Activated CD8-positive, alpha-beta memory T cell treated with anti-CD3 and anti-CD28 coated beads, Interleukin-2, amount 10 ng/mL, durations not matched to agents 7 days and 5 days (primary cell): ENCODE measurements at regions of chr1 and their contacts with region 1.

Region 1: DNA sequence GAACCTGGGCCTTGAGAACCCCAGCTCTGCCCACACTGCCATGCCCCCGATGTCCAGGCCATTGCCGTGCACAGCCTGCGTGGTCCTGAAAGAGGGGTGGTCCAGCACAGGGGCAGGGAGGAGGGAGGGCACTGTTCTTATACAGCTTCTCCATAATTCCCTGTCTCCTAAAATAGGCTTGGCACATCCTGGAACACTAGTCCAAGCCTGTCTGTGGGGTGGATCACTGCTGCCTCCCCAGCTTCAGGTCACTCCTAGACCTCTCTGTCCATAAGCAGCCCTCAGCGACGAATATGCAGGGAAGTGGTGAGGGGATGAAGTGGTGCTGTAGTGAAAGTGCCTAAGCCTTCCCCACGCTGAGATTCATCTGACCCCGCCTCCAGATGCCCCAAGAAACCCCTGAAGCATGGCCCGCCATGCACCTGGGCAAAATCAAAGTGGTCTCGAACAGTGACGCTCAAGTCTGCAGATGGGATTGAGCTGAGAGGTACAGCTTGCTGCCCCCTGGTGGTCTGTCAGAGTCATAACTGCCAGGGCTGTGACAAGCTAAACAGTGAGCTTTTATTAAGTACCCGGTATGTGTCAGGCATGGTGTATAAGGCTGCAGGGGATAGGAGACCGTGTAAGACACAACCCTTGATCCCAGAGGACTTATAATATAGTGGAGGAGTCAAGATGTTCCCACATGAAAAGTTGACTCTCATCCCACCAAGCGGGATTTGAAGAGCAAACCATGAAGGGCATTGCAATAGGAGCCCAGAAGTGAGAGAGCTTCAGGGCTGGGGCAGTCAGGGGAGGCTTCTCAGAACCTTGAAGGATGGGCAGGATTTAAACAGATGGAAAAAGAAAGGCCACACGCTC is 66.6 kb downstream of the FAM163A start:
- DNase-seq: peak; percentile 69
- ATAC-seq: peak; percentile 55
- H3K4me3 Mint-ChIP-seq: no peak overlapping the region
- H3K27ac Mint-ChIP-seq: no peak overlapping the region
- H3K4me1 Mint-ChIP-seq: peaks cover 3% of the 10 kb centered on the region
- H3K27me3 Mint-ChIP-seq: peaks cover 4% of the 10 kb centered on the region

Region 2: DNA sequence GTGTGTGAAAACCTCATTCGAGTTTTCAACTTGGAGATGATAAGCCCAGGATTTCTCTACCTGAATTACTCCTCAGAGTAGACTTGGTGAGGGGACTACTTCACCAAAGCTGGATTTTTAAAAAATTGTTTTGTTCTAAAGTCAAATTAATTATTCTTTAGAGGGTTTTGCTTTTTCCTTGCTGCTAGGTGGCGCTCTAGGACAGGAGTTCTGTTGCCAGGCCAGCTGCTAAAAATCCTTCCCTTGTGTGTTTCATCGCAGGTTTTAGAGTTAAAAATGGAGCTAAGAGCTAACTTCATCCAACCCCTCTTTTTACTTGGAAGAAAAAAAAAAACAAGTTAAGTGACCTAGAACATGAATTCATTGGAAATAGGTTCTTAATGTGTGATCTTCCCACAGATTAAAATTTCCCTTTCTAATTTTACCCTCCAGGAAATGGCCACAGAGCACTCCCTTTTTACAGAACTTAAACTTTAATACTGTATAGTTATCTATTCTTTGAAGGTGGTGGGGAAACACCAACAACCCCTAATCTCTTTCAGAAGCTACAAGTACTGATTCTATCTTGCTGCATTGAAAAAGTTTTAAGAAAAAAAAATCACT is 103.3 kb before region 1 on chr1:
- CTCF ChIA-PET with region 1: interaction called, 222 read pairs
- DNase-seq: peak; percentile 63
- ATAC-seq: no peak
- H3K4me3 Mint-ChIP-seq: no peak overlapping the region
- H3K27ac Mint-ChIP-seq: no peak overlapping the region
- H3K4me1 Mint-ChIP-seq: no peaks in the 10 kb centered on the region
- H3K27me3 Mint-ChIP-seq: peaks cover 6% of the 10 kb centered on the region

Region 3: DNA sequence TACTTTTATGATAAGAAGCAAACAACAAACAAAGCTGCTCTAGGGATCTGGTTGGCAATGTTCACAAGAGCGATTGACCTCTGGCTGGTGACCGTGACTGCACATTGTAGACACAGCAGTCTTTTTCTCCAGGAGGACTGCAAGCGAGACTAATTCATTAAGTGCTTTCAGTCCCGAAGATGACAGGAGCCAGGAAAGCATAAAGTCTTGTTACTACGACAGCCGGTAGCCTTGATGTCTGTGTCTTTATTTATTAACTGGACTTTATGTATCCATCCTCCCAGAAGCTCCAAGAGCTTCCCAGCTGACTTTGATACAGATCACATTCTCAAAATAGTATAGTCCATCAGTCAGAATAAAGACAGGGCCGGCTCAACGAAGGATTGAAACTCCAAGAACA is 48.4 kb before region 1 on chr1:
- CTCF ChIA-PET with region 1: interaction called, 10 read pairs
- DNase-seq: no peak
- ATAC-seq: no peak
- H3K4me3 Mint-ChIP-seq: no peak overlapping the region
- H3K27ac Mint-ChIP-seq: no peak overlapping the region
- H3K4me1 Mint-ChIP-seq: no peaks in the 10 kb centered on the region
- H3K27me3 Mint-ChIP-seq: peaks cover 10% of the 10 kb centered on the region

Region 4: DNA sequence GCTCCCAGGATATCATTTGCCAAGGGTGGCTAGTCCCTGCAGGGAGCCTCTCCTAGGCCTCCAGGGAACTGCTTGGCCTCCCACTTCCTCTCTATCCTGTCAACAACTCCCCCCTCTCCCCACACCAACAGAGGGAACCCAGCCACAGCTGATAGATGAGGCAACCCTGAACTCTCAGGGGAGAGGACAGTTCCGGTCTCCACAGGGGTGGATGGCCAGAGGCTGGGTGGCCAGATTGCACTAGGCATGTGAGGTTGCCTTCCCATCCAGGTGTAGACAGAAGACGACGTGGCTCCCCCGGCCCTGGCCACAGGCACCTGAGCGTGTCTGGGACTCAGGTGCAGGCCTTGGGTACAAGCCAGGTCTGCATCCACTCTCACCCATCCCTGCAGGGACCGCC is 14.5 kb after region 1 on chr1:
- CTCF ChIA-PET with region 1: interaction called, 27 read pairs
- DNase-seq: peak; percentile 34
- ATAC-seq: no peak
- H3K4me3 Mint-ChIP-seq: no peak overlapping the region
- H3K27ac Mint-ChIP-seq: no peak overlapping the region
- H3K4me1 Mint-ChIP-seq: peaks cover 4% of the 10 kb centered on the region
- H3K27me3 Mint-ChIP-seq: peaks cover 12% of the 10 kb centered on the region

Region 5: GRCh38 chr1:179831852-179832699 is 22.3 kb after region 1 on chr1:
- CTCF ChIA-PET with region 1: interaction called, 16 read pairs
- DNase-seq: peak; percentile 27
- ATAC-seq: peak; percentile 27
- H3K4me3 Mint-ChIP-seq: no peak overlapping the region
- H3K27ac Mint-ChIP-seq: no peak overlapping the region
- H3K4me1 Mint-ChIP-seq: peaks cover 21% of the 10 kb centered on the region
- H3K27me3 Mint-ChIP-seq: peaks cover 8% of the 10 kb centered on the region

Region 6: DNA sequence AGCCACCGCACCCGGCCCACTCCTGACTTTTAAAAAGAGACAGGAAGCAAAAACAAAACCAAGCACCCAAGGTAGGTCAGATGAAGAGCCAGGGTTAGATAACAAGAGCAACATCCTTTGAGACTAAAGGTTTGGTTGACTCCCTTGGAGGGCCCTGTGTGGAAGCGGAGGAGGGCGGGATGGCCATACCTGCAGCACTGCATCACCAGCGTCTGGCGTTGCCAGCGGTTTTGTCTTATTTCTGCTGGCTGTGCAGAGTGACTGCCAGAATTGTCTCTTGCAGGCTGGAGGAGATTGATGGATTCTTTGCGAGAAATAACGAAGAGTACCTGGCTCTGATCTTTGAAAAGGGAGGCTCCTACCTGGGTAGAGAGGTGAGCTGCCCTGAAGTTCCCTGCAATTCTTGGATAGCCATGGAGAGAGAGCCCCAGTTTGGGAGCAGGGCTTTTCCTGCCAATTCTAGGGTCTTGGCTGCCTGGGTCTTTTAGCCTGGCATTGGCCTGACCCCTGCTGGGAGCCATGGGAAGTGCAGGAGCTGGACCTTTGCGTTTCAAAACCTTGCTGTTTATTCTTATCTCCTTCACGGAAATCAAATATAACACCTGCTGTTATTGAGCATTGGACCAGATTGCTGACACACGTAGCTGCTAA is 368.9 kb after region 1 on chr1:
- CTCF ChIA-PET with region 1: interaction called, 26 read pairs
- DNase-seq: peak; percentile 73
- ATAC-seq: peak; percentile 57
- H3K4me3 Mint-ChIP-seq: no peak overlapping the region
- H3K27ac Mint-ChIP-seq: no peak overlapping the region
- H3K4me1 Mint-ChIP-seq: no peaks in the 10 kb centered on the region
- H3K27me3 Mint-ChIP-seq: no peaks in the 10 kb centered on the region